ENCODE measurements at regions of chr1 and their contacts with region 1.

Region 1: DNA sequence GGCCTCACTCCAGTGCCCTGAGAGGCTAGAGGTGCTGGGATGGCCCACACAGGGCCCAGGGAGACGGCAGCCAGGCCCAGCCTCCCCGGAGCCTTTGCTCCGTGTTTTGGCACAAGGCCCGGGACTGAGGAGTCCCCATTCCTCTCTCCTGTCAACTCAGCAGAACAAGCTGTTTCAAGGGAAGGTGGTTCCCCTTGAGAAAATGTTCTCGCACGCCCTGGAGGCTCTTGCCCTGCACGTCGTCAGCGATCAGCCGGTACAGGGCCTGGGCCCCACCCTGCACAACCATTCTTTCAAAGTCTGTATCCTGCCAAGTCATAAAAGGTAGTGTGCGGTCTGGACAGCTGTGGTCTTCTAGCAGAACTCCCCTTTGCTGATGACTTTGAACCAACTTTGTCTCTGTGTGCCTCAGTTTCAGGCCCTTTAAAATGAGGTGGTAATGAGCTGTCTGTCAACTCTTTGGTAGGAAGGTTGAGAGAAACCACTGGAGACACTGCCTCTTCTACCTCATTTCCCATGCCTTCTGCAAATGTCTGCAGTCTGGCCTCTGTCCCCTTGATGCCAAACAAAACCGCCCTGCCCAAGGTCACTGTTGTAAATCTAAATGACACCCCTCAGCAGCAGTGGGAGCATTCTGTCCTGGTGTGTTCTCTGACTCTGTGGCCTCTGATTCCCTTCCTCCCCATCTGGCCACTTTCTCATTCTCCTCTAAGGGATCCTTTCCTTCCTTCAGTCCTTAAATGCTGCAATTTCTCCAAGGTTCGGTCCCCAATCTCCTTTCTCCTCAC is 138.6 kb upstream of the JUN start:
- H3K4me3 Mint-ChIP-seq: no peak overlapping the region
- H3K27ac Mint-ChIP-seq: peak overlapping the region; percentile 36
- H3K4me1 Mint-ChIP-seq: peaks cover 56% of the 10 kb centered on the region
- H3K27me3 Mint-ChIP-seq: peaks cover 3% of the 10 kb centered on the region

Region 2: DNA sequence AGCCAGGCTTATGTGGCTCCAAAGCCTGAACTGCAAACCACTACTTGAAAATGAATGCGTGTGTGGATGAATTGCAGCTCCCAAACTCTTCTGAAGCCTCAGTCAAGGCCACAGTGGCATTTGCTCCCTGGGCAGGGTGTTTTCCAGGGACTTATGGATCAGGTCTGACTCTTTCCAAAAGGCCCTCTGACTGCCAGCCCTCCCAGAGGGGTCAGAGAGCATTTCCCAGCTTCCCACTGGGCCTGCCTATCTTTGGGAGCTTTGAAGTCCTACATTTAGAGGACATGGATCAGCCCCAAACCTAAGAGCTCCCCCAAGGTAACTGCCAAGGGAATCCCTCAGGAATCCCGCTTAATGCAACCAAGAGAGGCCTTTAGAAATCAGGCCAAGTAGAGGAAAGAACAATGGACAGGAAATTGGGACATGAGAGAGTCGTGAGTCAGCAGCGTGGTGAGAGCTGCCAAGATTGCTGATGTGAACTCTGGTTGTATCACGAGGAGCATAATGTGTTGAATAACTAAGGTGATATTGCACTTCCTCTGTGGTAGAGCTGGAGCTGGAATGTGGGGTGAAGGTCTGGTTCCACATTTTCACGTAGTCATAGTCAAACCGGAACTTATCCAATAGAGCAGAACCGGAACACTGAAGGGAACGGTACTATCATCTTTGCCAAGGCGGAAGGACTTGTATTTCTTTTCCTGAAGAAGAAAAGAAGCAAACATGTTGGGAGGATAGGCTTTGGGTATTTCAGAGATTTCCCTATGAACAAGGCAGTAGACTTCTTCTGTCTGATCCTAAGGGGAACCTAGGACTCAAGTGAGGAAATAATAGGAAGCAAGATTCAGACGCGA is 39.2 kb before region 1 on chr1:
- intact Hi-C with region 1: no loop called
- H3K4me3 Mint-ChIP-seq: no peak overlapping the region
- H3K27ac Mint-ChIP-seq: peak overlapping the region; percentile 67
- H3K4me1 Mint-ChIP-seq: peaks cover 85% of the 10 kb centered on the region
- H3K27me3 Mint-ChIP-seq: no peaks in the 10 kb centered on the region

Region 3: GRCh38 chr1:58971629-58972140 is 49.2 kb after region 1 on chr1:
- intact Hi-C with region 1: loop called (anchors 10 kb)
- H3K4me3 Mint-ChIP-seq: no peak overlapping the region
- H3K27ac Mint-ChIP-seq: no peak overlapping the region
- H3K4me1 Mint-ChIP-seq: peaks cover 56% of the 10 kb centered on the region
- H3K27me3 Mint-ChIP-seq: peaks cover 5% of the 10 kb centered on the region